ENCODE measurements at regions of chrX and their contacts with region 1.

Region 1: DNA sequence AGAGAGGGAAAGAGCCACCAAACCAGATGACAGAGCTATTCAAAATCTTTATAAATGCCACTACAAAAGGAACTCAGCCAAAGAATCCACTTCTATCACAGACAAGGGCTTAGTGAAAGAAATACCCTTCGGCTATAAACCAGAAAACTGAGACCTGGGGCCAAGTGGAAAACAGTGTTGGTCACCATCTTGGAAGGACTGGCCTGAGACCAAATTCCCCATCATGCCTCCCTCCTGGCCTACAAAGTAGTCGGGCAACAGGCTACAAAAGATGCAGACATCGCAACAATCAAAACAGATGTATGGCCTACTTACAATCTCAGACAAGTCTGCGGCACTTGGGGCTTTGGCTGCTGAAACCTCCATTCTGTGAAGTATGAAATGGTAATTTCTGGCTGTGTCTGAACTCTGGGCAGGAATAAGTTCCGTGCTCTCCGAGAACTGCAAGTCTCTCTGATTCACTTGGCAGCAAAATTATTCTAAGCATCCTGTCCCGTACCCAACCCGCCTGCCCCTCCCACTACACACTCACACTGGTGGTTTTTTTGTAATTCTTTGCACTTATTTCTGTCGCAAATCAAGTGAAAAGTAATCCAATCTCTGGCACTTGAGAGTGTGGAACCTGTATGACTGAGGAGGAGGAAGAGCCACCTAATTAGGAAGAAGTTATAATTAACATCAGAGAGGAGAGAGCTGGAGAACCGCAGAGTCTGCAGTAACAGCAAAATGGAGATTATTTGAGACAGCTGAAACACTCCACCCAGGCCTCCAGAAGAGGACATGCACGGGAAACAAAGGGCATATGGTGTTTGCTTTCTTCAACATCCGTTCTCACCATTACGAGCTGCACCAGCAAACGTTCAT is 87.8 kb downstream of the SH3KBP1 start:
- DNase-seq: no peak

Region 2: GRCh38 chrX:19563746-19564145 is 235.8 kb before region 1 on chrX:
- intact Hi-C with region 1: loop called in 1 of 2 experiments (anchors 2 kb)
- DNase-seq: no peak

Region 3: DNA sequence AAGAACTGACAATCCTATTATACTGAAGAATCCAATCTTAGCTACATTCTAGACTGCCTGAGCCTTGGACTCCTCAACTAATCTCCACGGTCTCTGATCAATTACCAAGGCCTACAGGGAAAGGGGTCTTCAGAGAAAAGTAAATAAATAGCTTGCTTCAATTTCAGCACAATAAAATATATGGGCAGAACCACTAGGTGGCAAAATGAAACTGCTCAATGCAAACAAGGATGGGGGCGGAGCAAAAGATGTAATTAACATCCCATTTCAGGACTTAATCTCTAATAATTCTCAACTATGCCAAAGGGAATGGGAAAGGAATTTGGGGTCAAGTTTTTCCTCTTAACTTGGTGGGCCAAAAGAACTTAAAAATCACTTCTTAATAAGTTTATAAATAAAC is 205.9 kb before region 1 on chrX:
- intact Hi-C with region 1: no loop called
- DNase-seq: no peak